ENCODE measurements at regions of chr2 and their contacts with region 1.

Region 1: GRCh38 chr2:96265840-96266679 is at the starts of genes CIAO1 and TMEM127:
- DNase-seq: peak; percentile 96 to 99 (median 97)
- ATAC-seq: peak; percentile 93
- H3K4me3 ChIP-seq: peak within 1 kb of the TSS; percentile 88 to 99
- H3K4me3 Mint-ChIP-seq: peak within 1 kb of the TSS; percentile 89
- H3K27ac ChIP-seq: peak within 1 kb of the TSS; percentile 93 to 97
- H3K27ac Mint-ChIP-seq: peak within 1 kb of the TSS; percentile 86
- H3K4me1 ChIP-seq: peaks cover 39% of the 10 kb centered on the region
- H3K4me1 Mint-ChIP-seq: peaks cover 45% of the 10 kb centered on the region
- H3K27me3 ChIP-seq: no peaks in the 10 kb centered on the region
- H3K27me3 Mint-ChIP-seq: no peaks in the 10 kb centered on the region
- CTCF ChIP-seq: no peak
- total RNA-seq, gene CIAO1: 51.9 to 58.0 TPM
- total RNA-seq, gene TMEM127: 44.7 to 49.6 TPM

Region 2: DNA sequence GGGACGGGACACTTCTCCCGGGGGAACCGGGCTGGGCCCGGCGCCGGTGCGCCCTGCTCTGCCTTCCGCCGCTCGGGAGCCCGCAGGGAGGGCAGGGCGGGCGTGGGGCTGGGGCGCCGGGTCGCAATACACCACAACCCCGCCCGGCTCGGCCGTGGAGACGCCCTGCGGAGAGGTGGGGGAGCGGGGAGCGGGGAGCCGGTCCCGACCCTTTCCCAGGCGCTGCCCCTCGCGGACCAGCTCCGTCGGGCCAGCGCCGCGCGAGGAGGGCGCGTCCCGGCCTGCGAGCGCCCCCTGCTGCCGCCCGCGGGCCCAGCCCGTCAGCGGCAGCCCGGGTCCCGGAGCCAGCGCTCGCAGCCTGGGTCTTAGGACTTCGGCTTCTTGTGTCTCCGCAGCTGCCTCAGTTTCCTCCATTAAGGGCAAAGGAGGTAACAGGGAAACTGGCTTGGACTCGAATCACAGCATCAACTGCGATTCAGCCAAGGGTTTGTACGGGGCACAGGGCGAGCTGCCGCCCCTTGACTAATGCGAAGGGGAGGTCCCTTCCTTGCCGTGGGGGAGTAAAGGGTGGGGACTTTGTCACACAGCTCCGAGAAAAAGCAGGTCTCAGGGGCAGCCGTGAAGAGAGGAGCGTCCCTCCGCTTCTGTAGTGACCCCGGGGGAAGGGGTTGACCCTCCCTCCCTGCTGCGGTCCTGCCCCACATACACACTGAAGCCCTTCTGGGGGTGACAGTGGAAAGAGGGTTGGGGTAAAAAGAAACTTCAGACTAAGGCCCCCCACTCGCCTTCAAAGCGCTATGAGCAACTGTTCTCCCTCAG is 149.0 kb before region 1 on chr2:
- CTCF ChIA-PET with region 1: interaction called, 3 read pairs
- POLR2A ChIA-PET with region 1: no interaction called
- intact Hi-C with region 1: loop called (anchors 1 kb)
- DNase-seq: peak; percentile 31 to 81 (median 61)
- ATAC-seq: peak; percentile 72
- H3K4me3 ChIP-seq: peak overlapping the region; percentile 7 to 50
- H3K4me3 Mint-ChIP-seq: peak overlapping the region; percentile 76
- H3K27ac ChIP-seq: no peak overlapping the region
- H3K27ac Mint-ChIP-seq: peak overlapping the region; percentile 74
- H3K4me1 ChIP-seq: peaks cover 8% of the 10 kb centered on the region
- H3K4me1 Mint-ChIP-seq: peaks cover 12% of the 10 kb centered on the region
- H3K27me3 ChIP-seq: peaks cover 0 to 3% of the 10 kb centered on the region in 2 experiments
- H3K27me3 Mint-ChIP-seq: peaks cover 23% of the 10 kb centered on the region
- CTCF ChIP-seq: peak; percentile 84

Region 3: GRCh38 chr2:96145036-96145847 is 120.8 kb before region 1 on chr2 and contains the start of gene DUSP2:
- CTCF ChIA-PET with region 1: interaction called, 5 read pairs
- POLR2A ChIA-PET with region 1: no interaction called
- intact Hi-C with region 1: loop called in 1 of 2 experiments (anchors 1 kb)
- DNase-seq: peak; percentile 80 to 97 (median 91)
- ATAC-seq: peak; percentile 37
- H3K4me3 ChIP-seq: peak within 1 kb of the TSS; percentile 91 to 96
- H3K4me3 Mint-ChIP-seq: peak within 1 kb of the TSS; percentile 94
- H3K27ac ChIP-seq: peak within 1 kb of the TSS; percentile 98 to 99
- H3K27ac Mint-ChIP-seq: peak within 1 kb of the TSS; percentile 94
- H3K4me1 ChIP-seq: peaks cover 61% of the 10 kb centered on the region
- H3K4me1 Mint-ChIP-seq: peaks cover 57% of the 10 kb centered on the region
- H3K27me3 ChIP-seq: no peaks in the 10 kb centered on the region
- H3K27me3 Mint-ChIP-seq: no peaks in the 10 kb centered on the region
- CTCF ChIP-seq: no peak
- total RNA-seq, gene DUSP2: 1,304 to 1,350 TPM

Region 4: DNA sequence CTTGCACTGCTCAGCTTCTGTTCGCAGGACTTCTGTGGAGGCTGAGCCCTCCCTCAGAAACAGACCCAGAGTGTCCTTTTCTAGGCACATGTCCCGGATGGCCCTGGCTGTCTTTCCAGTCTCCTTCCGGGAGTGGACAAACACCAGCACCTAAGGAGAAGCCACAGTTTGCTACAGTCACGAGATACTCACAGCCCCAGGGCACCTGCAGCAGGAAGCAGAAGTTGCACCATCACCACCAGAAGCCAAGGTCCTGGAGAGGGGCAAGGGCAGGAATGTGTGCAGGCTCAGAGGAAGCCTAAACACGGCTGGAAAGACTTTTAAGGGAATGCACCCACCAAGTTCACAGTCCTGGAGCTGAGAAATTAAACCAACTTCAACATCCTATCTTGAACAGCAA is 25.7 kb after region 1 on chr2:
- CTCF ChIA-PET with region 1: no interaction called
- POLR2A ChIA-PET with region 1: no interaction called
- intact Hi-C with region 1: no loop called
- DNase-seq: no peak
- ATAC-seq: no peak
- H3K4me3 ChIP-seq: no peak overlapping the region
- H3K4me3 Mint-ChIP-seq: no peak overlapping the region
- H3K27ac ChIP-seq: no peak overlapping the region
- H3K27ac Mint-ChIP-seq: no peak overlapping the region
- H3K4me1 ChIP-seq: no peaks in the 10 kb centered on the region
- H3K4me1 Mint-ChIP-seq: no peaks in the 10 kb centered on the region
- H3K27me3 ChIP-seq: no peaks in the 10 kb centered on the region
- H3K27me3 Mint-ChIP-seq: no peaks in the 10 kb centered on the region
- CTCF ChIP-seq: no peak

Region 5: GRCh38 chr2:96305091-96305978 is 39.3 kb after region 1 on chr2 and contains the start of gene SNRNP200:
- CTCF ChIA-PET with region 1: no interaction called
- POLR2A ChIA-PET with region 1: interaction called, 9 read pairs
- intact Hi-C with region 1: loop called (anchors 1 kb)
- DNase-seq: peak; percentile 78 to 97 (median 91)
- ATAC-seq: peak; percentile 82
- H3K4me3 ChIP-seq: peak within 1 kb of the TSS; percentile 84 to 95
- H3K4me3 Mint-ChIP-seq: peak within 1 kb of the TSS; percentile 100
- H3K27ac ChIP-seq: peak within 1 kb of the TSS; percentile 96 to 98
- H3K27ac Mint-ChIP-seq: peak within 1 kb of the TSS; percentile 100
- H3K4me1 ChIP-seq: peaks cover 39% of the 10 kb centered on the region
- H3K4me1 Mint-ChIP-seq: peaks cover 55% of the 10 kb centered on the region
- H3K27me3 ChIP-seq: no peaks in the 10 kb centered on the region
- H3K27me3 Mint-ChIP-seq: no peaks in the 10 kb centered on the region
- CTCF ChIP-seq: no peak
- total RNA-seq, gene SNRNP200: 318 to 348 TPM

Region 6: DNA sequence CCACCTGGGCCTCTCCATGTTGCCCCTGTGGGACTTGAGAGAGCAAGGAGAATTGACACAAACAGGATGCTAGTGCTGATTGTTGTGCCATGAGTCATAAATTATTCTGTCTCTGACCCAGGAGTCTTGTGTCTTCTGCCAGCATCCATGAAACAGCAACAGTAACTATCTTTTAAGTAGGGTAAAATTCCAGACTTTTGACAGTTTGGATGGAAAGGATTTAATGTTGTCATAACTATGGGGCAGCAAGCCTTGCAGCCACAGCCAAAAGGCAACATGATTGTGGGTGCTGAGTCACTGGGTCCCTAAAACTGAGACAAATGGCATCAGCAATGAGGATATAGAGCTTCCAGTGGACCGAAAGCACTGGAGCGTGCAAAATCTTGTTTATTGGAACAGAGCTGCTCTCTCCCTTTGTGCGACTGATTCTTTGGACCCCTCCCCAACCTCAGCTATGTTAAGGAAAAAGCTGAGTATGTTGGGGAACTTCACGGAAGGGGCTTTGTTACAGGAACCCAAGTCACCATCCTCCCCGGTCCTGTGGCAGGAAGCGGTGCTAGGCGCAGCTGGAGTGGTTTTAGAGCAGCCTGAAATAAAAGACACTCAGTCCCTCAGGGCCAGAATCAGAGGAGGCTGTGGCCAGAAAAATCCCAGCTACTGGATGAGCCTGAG is 49.5 kb after region 1 on chr2:
- CTCF ChIA-PET with region 1: no interaction called
- POLR2A ChIA-PET with region 1: no interaction called
- intact Hi-C with region 1: no loop called
- DNase-seq: peak in 6 of 9 experiments; percentile 22 to 60 (median 42)
- ATAC-seq: peak; percentile 51
- H3K4me3 ChIP-seq: no peak overlapping the region
- H3K4me3 Mint-ChIP-seq: peak overlapping the region; percentile 47
- H3K27ac ChIP-seq: peak overlapping the region in 1 of 2 experiments; percentile 70
- H3K27ac Mint-ChIP-seq: peak overlapping the region; percentile 87
- H3K4me1 ChIP-seq: peaks cover 24% of the 10 kb centered on the region
- H3K4me1 Mint-ChIP-seq: peaks cover 36% of the 10 kb centered on the region
- H3K27me3 ChIP-seq: no peaks in the 10 kb centered on the region
- H3K27me3 Mint-ChIP-seq: no peaks in the 10 kb centered on the region
- CTCF ChIP-seq: no peak

Region 7: DNA sequence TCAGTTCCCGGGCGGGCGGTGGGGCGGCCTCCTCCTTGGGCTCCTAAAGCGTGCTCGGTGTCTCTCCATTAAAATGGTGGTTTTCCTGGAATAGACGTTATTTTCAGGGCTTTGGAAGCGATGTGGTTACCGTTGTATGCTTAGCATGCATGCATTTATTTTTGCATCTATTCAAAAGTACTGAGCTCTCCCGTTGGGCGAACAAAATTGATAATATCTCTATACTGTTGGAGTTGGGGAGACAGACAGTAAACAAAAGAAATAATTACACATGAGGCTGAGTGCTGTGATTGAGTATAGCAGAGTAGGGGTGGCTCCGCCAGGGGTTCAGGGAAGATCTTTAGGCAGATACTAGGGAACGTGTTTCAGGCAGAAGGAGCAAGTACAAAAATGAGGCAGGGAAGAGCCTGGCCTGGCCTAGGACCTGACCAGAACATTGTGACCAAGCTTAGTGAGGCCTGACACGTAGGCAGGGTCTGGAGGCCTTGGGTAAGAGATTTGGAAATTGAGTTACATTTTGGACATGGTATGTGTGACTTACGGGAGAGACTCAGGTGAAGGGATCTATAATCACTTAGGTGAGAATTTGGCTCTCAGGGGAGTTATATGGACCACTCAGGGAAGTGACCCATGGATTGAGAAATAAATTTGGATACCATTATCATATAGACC is 70.2 kb after region 1 on chr2:
- CTCF ChIA-PET with region 1: no interaction called
- POLR2A ChIA-PET with region 1: interaction called, 3 read pairs
- intact Hi-C with region 1: loop called in 1 of 2 experiments (anchors 2 kb)
- DNase-seq: no peak
- ATAC-seq: no peak
- H3K4me3 ChIP-seq: peak overlapping the region; percentile 42 to 83
- H3K4me3 Mint-ChIP-seq: peak overlapping the region; percentile 85
- H3K27ac ChIP-seq: no peak overlapping the region
- H3K27ac Mint-ChIP-seq: peak overlapping the region; percentile 63
- H3K4me1 ChIP-seq: peaks cover 14% of the 10 kb centered on the region
- H3K4me1 Mint-ChIP-seq: peaks cover 29% of the 10 kb centered on the region
- H3K27me3 ChIP-seq: no peaks in the 10 kb centered on the region
- H3K27me3 Mint-ChIP-seq: no peaks in the 10 kb centered on the region
- CTCF ChIP-seq: no peak

Region 8: DNA sequence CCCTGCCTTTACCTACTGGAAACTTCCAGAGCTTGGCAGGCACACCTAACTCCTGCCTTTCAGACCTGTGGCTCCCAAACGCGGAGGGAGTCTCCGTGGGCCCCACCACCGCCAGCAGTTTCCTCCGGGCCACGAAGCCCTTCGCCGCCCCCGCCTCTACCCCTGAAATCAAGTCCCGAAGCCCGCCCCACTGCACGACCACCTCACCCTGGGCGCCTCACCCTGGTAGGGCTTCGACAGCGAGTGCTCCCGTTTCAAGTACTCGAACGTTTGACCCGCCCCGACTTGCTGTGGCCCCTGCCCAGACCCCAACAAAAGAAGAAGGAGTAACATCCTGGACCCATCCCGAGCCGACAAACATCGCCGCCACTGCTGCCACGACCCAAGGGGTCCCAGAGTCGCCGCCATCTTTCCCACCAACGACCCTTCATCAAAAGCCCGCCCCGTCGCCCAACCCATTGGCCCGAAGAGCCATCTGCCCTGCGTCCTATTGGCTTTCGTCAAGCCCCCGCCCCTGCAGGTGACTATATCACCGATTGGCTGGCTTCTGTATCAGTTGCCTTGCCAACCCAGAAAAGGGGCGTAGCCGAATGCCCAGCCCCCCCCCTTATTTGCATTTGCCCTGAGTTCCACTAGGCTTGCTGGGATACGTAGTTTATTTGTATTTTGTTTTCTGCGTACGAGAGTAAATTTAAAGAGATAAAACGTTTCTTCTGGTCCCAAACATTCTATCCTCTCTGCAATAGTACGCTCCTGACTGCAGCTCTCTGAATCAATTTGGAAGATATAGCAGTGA is 473.8 kb after region 1 on chr2 and contains the start of gene LMAN2L:
- CTCF ChIA-PET with region 1: no interaction called
- POLR2A ChIA-PET with region 1: no interaction called
- intact Hi-C with region 1: loop called (anchors 1 to 10 kb)
- DNase-seq: peak; percentile 92 to 99 (median 96)
- ATAC-seq: peak; percentile 98
- H3K4me3 ChIP-seq: peak within 1 kb of the TSS; percentile 60 to 98
- H3K4me3 Mint-ChIP-seq: peak within 1 kb of the TSS; percentile 97
- H3K27ac ChIP-seq: peak within 1 kb of the TSS; percentile 46 to 73
- H3K27ac Mint-ChIP-seq: peak within 1 kb of the TSS; percentile 91
- H3K4me1 ChIP-seq: peaks cover 13% of the 10 kb centered on the region
- H3K4me1 Mint-ChIP-seq: peaks cover 38% of the 10 kb centered on the region
- H3K27me3 ChIP-seq: no peaks in the 10 kb centered on the region
- H3K27me3 Mint-ChIP-seq: no peaks in the 10 kb centered on the region
- CTCF ChIP-seq: no peak
- total RNA-seq, gene LMAN2L: 1.1 to 1.7 TPM

Region 9: GRCh38 chr2:96816128-96816835 is 550.2 kb after region 1 on chr2 and contains the start of gene CNNM3:
- CTCF ChIA-PET with region 1: no interaction called
- POLR2A ChIA-PET with region 1: no interaction called
- intact Hi-C with region 1: loop called in 1 of 2 experiments (anchors 10 kb)
- DNase-seq: peak; percentile 90 to 98 (median 96)
- ATAC-seq: peak; percentile 92
- H3K4me3 ChIP-seq: peak within 1 kb of the TSS; percentile 70 to 83
- H3K4me3 Mint-ChIP-seq: peak within 1 kb of the TSS; percentile 87
- H3K27ac ChIP-seq: peak within 1 kb of the TSS; percentile 57 to 70
- H3K27ac Mint-ChIP-seq: peak within 1 kb of the TSS; percentile 90
- H3K4me1 ChIP-seq: peaks cover 48% of the 10 kb centered on the region
- H3K4me1 Mint-ChIP-seq: peaks cover 63% of the 10 kb centered on the region
- H3K27me3 ChIP-seq: no peaks in the 10 kb centered on the region
- H3K27me3 Mint-ChIP-seq: no peaks in the 10 kb centered on the region
- CTCF ChIP-seq: peak; percentile 63
- total RNA-seq, gene CNNM3: 40.1 to 41.8 TPM

Measured in CD8-positive, alpha-beta T cell (primary cell).